ENCODE measurements at regions of chr2 and their contacts with region 1.

Region 1: GRCh38 chr2:130797493-130798435 is 39.0 kb upstream of the ARHGEF4 start:
- DNase-seq: peak; percentile 77
- H3K27ac ChIP-seq: peak overlapping the region; percentile 91
- CTCF ChIP-seq: peak; percentile 92

Region 2: GRCh38 chr2:130807659-130808385 is 10.1 kb after region 1 on chr2:
- CTCF ChIA-PET with region 1: interaction called, 14 read pairs
- POLR2A ChIA-PET with region 1: no interaction called
- DNase-seq: peak; percentile 66
- H3K27ac ChIP-seq: peak overlapping the region; percentile 100
- CTCF ChIP-seq: no peak

Region 3: DNA sequence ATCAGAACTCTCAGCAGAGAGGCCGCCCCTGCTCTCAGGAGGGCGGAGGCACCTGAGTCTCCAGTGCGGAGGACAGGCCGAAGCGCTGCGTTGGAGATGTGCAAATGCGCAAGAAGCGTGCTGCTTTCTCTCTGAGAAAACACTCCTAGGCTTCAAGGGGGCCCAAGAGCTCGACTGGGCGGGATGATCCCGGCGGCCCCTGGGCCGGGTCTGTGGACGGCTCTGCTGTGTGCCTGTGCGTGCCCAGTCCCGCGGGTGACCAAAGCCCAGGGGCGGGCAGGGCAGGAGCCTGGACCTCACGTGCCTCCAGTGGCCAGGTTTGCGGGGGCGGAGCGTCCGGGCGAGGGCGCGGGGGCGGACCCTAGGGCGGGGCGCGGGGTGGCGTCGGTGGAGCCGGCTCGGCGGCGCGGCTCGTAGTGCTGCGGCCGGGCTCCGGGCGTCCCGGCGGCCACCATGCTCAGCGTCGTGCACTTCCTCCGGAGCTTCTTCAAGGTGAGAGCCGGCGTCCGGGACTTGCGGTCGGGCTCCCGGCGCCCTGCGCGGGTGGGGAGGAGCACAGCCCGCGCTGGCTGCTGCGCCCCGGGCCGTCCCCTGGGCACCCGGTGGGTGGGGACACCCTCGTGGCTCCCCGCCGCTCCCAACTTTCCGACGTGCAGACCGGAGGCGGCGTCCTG is 38.9 kb after region 1 on chr2 and contains the start of gene ARHGEF4:
- CTCF ChIA-PET with region 1: interaction called, 22 read pairs
- POLR2A ChIA-PET with region 1: no interaction called
- DNase-seq: peak; percentile 75
- H3K27ac ChIP-seq: peak within 1 kb of the TSS; percentile 84
- CTCF ChIP-seq: no peak

Region 4: GRCh38 chr2:130894326-130894942 is 96.7 kb after region 1 on chr2:
- CTCF ChIA-PET with region 1: no interaction called
- POLR2A ChIA-PET with region 1: no interaction called
- DNase-seq: peak; percentile 23
- H3K27ac ChIP-seq: peak overlapping the region; percentile 87
- CTCF ChIP-seq: no peak

Measured in RWPE1 (cell line).